PC-3 (cell line): ENCODE measurements at regions of chr4 and their contacts with region 1.

Region 1: GRCh38 chr4:83639849-83640493 is 104.1 kb downstream of the GPAT3 start:
- DNase-seq: peak; percentile 84
- ATAC-seq: peak; percentile 71
- H3K4me3 ChIP-seq: no peak overlapping the region
- H3K27ac ChIP-seq: no peak overlapping the region
- H3K4me1 ChIP-seq: no peaks in the 10 kb centered on the region
- H3K27me3 ChIP-seq: no peaks in the 10 kb centered on the region
- CTCF ChIP-seq: peak; percentile 78

Region 2: DNA sequence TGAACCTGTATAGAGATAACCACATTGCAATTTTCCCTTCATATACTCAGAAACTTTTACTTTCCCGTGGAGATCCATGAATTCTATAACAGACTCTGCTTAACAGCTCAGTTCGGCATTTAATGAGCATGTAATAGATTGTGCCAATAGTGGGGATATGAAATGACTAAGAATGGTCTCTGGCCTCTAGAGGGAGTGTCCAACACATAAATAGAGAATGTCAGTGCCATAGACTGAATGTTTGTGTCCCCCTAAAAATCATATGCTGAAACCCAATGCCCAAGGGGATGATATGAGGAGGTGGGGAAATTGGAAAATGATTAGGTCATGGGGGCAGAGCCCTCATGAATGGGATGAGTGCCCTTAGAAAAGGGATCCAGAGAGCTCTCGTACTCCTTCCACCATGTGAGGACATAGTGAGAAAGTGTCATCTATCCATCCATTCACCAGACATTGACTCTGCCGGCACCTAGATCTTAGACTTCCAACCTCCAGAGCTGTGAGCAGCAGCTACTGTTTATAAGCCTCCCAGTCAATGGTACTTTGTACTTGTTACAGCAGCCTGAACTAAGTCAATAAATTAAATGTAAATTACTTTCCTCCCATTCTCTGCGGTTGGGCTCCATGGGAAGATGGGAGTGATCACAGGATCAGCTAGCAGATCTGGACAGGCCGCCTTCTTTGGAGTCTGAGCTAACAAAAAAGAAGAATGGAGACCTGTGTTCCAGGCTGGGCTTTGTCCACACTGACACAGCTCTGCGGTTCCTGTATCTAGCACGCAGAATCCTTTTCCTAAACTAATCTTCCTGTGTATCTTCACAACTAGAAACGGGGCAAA is 277.3 kb before region 1 on chr4:
- CTCF ChIA-PET with region 1: no interaction called
- POLR2A ChIA-PET with region 1: no interaction called
- intact Hi-C with region 1: loop called (anchors 2 kb)
- DNase-seq: peak; percentile 38
- ATAC-seq: peak; percentile 84
- H3K4me3 ChIP-seq: no peak overlapping the region
- H3K27ac ChIP-seq: no peak overlapping the region
- H3K4me1 ChIP-seq: peaks cover 11% of the 10 kb centered on the region
- H3K27me3 ChIP-seq: no peaks in the 10 kb centered on the region
- CTCF ChIP-seq: peak; percentile 69

Region 3: GRCh38 chr4:83503974-83504373 is 136.0 kb before region 1 on chr4:
- CTCF ChIA-PET with region 1: no interaction called
- POLR2A ChIA-PET with region 1: no interaction called
- intact Hi-C with region 1: loop called (anchors 1 kb)
- DNase-seq: no peak
- ATAC-seq: no peak
- H3K4me3 ChIP-seq: no peak overlapping the region
- H3K27ac ChIP-seq: no peak overlapping the region
- H3K4me1 ChIP-seq: no peaks in the 10 kb centered on the region
- H3K27me3 ChIP-seq: no peaks in the 10 kb centered on the region
- CTCF ChIP-seq: no peak

Region 4: DNA sequence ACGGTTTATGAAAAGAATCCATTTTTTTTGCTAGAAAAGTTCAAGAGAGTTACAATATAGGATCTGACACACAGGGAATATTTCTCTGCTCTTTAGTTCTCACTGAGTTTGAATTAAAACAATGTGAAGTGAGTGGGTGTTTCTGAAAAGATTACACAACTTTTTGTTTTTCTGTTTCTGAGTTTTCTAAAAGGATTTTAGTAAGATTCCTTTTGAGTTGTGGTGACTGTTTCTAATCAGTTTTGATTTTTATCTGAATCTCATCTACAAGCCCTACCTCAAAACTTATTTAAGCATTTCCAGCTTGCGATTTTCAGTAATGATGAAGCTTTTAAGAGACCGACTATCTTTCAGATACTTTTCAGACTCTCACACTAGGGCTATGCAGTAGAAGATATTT is 37.7 kb after region 1 on chr4:
- CTCF ChIA-PET with region 1: no interaction called
- POLR2A ChIA-PET with region 1: no interaction called
- intact Hi-C with region 1: no loop called
- DNase-seq: no peak
- ATAC-seq: no peak
- H3K4me3 ChIP-seq: no peak overlapping the region
- H3K27ac ChIP-seq: no peak overlapping the region
- H3K4me1 ChIP-seq: peaks cover 21% of the 10 kb centered on the region
- H3K27me3 ChIP-seq: no peaks in the 10 kb centered on the region
- CTCF ChIP-seq: no peak

Region 5: GRCh38 chr4:83771113-83771705 is 131.2 kb after region 1 on chr4:
- CTCF ChIA-PET with region 1: no interaction called
- POLR2A ChIA-PET with region 1: no interaction called
- intact Hi-C with region 1: loop called (anchors 5 kb)
- DNase-seq: peak; percentile 42
- ATAC-seq: peak; percentile 54
- H3K4me3 ChIP-seq: no peak overlapping the region
- H3K27ac ChIP-seq: no peak overlapping the region
- H3K4me1 ChIP-seq: no peaks in the 10 kb centered on the region
- H3K27me3 ChIP-seq: no peaks in the 10 kb centered on the region
- CTCF ChIP-seq: peak; percentile 65

Region 6: GRCh38 chr4:84503495-84504437 is 863.8 kb after region 1 on chr4:
- CTCF ChIA-PET with region 1: no interaction called
- POLR2A ChIA-PET with region 1: no interaction called
- intact Hi-C with region 1: loop called (anchors 1 kb)
- DNase-seq: peak; percentile 78
- ATAC-seq: peak; percentile 61
- H3K4me3 ChIP-seq: no peak overlapping the region
- H3K27ac ChIP-seq: no peak overlapping the region
- H3K4me1 ChIP-seq: no peaks in the 10 kb centered on the region
- H3K27me3 ChIP-seq: no peaks in the 10 kb centered on the region
- CTCF ChIP-seq: peak; percentile 82